Cardiac septum (tissue), 1 donor: ENCODE measurements at regions of chr3 and their contacts with region 1.

Region 1: GRCh38 chr3:141231101-141231935 is at the start of gene PXYLP1:
- DNase-seq: peak; percentile 98
- total RNA-seq, gene PXYLP1: 38.8 TPM

Region 2: DNA sequence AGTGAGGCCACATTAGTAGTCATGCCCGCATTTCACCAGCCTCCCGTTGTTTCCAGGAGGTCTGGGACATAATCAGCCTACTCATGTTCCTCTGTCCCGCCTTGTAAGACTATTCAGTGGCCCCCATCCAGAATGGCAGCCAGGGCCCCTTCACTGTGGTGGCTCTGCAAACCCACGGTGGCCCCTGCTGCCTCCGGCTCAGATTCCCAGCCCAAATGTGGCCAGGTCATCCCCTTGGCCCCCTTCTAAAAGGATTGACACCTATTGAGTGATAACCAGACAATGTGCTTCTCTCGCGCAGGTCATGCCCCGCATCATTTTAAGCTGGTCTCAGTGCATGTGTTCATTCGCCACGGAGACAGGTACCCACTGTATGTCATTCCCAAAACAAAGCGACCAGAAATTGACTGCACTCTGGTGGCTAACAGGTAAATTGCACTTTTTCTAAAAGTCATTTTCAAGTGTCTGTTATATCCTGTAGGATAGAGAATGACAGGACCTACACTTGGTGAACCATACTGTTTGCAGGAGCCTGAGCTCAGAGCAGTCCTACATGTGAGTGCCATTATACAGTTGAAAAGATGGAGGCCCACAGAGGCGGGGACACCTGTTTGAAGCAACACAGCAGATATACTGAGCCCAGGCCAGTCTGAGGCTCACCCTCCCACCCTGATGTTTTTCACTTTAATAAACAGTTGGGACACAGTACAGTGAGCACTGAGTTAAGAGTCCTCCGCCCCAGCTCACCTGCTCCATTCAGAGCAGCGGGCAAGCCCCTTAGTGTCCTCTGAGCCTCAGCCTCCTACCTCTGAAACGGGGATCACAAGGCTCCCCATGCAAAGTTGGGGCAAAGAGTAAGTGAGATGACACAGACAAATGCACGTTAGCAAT is 48.0 kb after region 1 on chr3:
- intact Hi-C with region 1: loop called (anchors 1 kb)
- DNase-seq: no peak